Left ventricle myocardium superior (tissue), 1 donor: ENCODE measurements at regions of chr1 and their contacts with region 1.

Region 1: DNA sequence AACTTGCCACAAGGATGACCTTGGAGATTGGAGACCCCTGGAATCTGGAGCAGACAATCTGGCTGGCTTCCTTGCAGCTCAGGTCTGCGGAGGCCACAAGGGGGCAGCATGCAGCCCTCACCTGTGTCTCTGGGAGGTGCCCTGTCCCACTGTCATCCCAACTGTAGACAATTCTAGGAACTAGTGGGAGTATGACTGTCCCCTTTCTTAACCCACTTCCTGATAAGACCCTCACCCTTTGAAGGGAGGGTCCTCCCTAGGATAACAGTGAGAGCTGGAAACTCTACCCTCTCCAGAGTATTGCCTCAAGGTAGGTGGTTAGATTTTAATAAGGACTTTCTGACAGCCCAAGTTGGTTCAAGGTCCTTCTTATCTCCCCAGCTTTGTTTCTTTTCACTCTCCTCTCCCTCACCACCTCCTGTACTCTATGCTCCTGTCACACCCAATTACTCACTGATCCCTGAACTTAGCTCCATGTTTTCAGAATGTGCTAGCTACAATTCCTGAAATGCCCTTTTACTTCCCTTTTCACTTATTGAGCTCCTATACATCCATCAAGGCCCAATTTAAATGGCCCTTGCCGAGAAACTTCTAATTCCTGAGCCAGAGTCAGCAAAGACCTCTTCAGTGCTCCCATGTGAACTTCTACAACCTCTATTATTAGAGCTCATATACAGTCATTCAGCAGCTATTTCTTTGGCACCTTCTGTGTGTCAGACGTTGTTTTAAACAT is 9.2 kb upstream of the KCNQ4 start:
- DNase-seq: peak; percentile 72
- ATAC-seq: peak; percentile 57

Region 2: GRCh38 chr1:40849801-40850592 is 75.6 kb after region 1 on chr1:
- intact Hi-C with region 1: loop called (anchors 10 kb)
- DNase-seq: peak; percentile 72
- ATAC-seq: peak; percentile 90